Naive thymus-derived CD8-positive, alpha-beta T cell (primary cell): ENCODE measurements at regions of chr1 and their contacts with region 1.

Region 1: GRCh38 chr1:26820784-26821269 is 5.7 kb upstream of the ZDHHC18 start:
- DNase-seq: peak in 9 of 10 donors; percentile 26 to 68 (median 46)
- ATAC-seq: peak; percentile 97 to 98
- H3K4me3 Mint-ChIP-seq: peak overlapping the region; percentile 71 to 92 (median 83)
- H3K27ac Mint-ChIP-seq: peak overlapping the region; percentile 74 to 96 (median 92)
- H3K4me1 Mint-ChIP-seq: peaks cover 9 to 37% (median 28%) of the 10 kb centered on the region in 4 donors
- H3K27me3 Mint-ChIP-seq: no peaks in the 10 kb centered on the region

Region 2: DNA sequence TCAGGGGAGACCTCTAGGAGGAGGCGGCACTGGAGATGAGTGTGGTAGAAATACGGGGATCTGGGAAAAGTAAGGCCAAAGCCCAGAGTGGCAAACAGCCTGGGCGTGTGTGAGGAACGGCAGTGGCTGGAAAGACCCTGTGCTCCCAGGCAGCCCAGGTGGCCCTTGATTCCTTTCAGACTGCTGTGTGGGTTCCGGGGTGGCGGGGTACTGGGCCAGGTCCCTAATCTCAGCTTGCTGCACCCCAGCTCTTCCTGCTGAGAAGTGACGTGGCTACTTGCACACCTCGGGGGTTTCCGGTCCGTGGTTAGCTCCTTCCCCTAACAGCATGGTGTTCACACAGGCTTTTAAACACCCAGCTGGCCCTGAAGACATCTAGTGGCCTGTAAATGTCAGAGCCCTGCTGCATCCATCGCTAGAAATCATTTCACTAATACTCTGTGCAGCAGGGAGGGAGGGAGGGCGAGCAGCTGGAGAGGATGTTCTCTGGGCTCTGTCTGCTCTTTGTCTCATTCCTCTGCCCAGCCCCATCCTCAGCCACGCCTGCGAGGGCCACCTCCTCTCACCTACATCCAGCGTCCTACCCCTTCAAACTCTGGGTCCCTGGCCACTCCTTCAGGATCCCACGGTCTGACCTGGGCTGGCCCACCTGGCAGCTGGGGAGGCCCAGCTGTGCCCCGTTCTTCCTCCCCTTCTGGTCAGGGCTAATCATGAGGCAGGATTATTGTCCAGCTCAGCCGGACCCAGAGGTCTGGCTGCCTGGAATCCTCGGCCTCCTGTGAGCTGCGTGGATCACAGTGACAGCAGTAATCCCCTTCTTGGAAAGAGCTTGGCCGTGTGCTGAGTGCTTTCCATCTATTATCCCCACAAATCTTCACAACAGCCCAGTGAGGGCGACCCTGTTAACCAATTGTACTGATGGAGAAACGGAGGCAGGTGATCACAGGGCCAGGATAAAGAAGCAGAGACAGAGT is 12.9 kb after region 1 on chr1:
- POLR2A ChIA-PET with region 1: interaction called, 28 read pairs
- DNase-seq: peak; percentile 74 to 94 (median 90)
- ATAC-seq: peak; percentile 97 to 98
- H3K4me3 Mint-ChIP-seq: peak overlapping the region; percentile 69 to 90 (median 81)
- H3K27ac Mint-ChIP-seq: peak overlapping the region; percentile 97 to 100 (median 99)
- H3K4me1 Mint-ChIP-seq: peaks cover 42 to 71% (median 69%) of the 10 kb centered on the region in 4 donors
- H3K27me3 Mint-ChIP-seq: peaks cover 0 to 2% (median 0%) of the 10 kb centered on the region in 5 donors